Activated CD4-positive, alpha-beta T cell treated with anti-CD3 and anti-CD28 coated beads, Interleukin-2, amount 10 ng/mL, durations not matched to agents 7 days and 5 days (primary cell): ENCODE measurements at regions of chr20 and their contacts with region 1.

Region 1: GRCh38 chr20:59087829-59088433 is 45.3 kb upstream of the PRELID3B start:
- DNase-seq: peak; percentile 86
- H3K4me3 Mint-ChIP-seq: no peak overlapping the region
- H3K27ac Mint-ChIP-seq: no peak overlapping the region
- H3K4me1 Mint-ChIP-seq: peaks cover 4% of the 10 kb centered on the region
- H3K27me3 Mint-ChIP-seq: peaks cover 26% of the 10 kb centered on the region

Region 2: GRCh38 chr20:58965088-58966064 is 122.6 kb before region 1 on chr20:
- CTCF ChIA-PET with region 1: no interaction called
- POLR2A ChIA-PET with region 1: no interaction called
- DNase-seq: no peak
- H3K4me3 Mint-ChIP-seq: no peak overlapping the region
- H3K27ac Mint-ChIP-seq: no peak overlapping the region
- H3K4me1 Mint-ChIP-seq: no peaks in the 10 kb centered on the region
- H3K27me3 Mint-ChIP-seq: peaks cover 44% of the 10 kb centered on the region

Region 3: GRCh38 chr20:59207742-59208357 is 119.9 kb after region 1 on chr20:
- CTCF ChIA-PET with region 1: interaction called, 49 read pairs
- POLR2A ChIA-PET with region 1: interaction called, 6 read pairs
- DNase-seq: peak; percentile 88
- H3K4me3 Mint-ChIP-seq: no peak overlapping the region
- H3K27ac Mint-ChIP-seq: no peak overlapping the region
- H3K4me1 Mint-ChIP-seq: peaks cover 17% of the 10 kb centered on the region
- H3K27me3 Mint-ChIP-seq: no peaks in the 10 kb centered on the region